Natural killer cell (primary cell): ENCODE measurements at regions of chr16 and their contacts with region 1.

Region 1: GRCh38 chr16:68980695-68981315 is 124.6 kb upstream of the HAS3 start:
- DNase-seq: no peak
- ATAC-seq: no peak
- H3K4me3 ChIP-seq: no peak overlapping the region
- H3K4me3 Mint-ChIP-seq: no peak overlapping the region
- H3K27ac ChIP-seq: no peak overlapping the region
- H3K27ac Mint-ChIP-seq: no peak overlapping the region
- H3K4me1 ChIP-seq: no peaks in the 10 kb centered on the region
- H3K4me1 Mint-ChIP-seq: no peaks in the 10 kb centered on the region
- H3K27me3 ChIP-seq: no peaks in the 10 kb centered on the region
- H3K27me3 Mint-ChIP-seq: no peaks in the 10 kb centered on the region
- CTCF ChIP-seq: no peak

Region 2: GRCh38 chr16:68520649-68521086 is 460.1 kb before region 1 on chr16:
- intact Hi-C with region 1: loop called (anchors 5 kb)
- DNase-seq: peak; percentile 79 to 95
- ATAC-seq: peak; percentile 98 to 99 (median 98)
- H3K4me3 ChIP-seq: no peak overlapping the region
- H3K4me3 Mint-ChIP-seq: peak overlapping the region; percentile 75
- H3K27ac ChIP-seq: no peak overlapping the region
- H3K27ac Mint-ChIP-seq: peak overlapping the region; percentile 56 to 87
- H3K4me1 ChIP-seq: peaks cover 11% of the 10 kb centered on the region
- H3K4me1 Mint-ChIP-seq: peaks cover 8 to 10% of the 10 kb centered on the region in 2 donors
- H3K27me3 ChIP-seq: no peaks in the 10 kb centered on the region
- H3K27me3 Mint-ChIP-seq: no peaks in the 10 kb centered on the region
- CTCF ChIP-seq: peak; percentile 99

Region 3: DNA sequence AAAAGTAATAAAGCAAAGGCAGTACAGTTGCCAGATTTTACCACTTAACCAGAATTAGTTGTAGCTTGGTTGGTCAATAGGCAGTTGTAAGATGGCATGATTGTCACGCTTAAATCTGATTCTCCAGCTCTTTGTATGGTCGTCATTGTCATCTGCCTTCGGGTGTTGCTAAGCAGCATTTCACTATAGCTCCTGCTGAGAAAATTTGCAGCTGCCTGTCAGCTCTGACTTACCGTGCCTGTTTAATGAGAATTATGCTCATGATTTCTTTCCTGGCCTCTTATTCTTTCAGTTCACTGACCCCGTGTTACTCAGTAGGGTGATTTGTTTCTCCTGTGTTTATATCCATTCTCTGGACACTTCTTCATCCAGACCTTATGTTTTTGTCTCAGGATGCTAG is 70.8 kb before region 1 on chr16:
- intact Hi-C with region 1: no loop called
- DNase-seq: no peak
- ATAC-seq: no peak
- H3K4me3 ChIP-seq: no peak overlapping the region
- H3K4me3 Mint-ChIP-seq: no peak overlapping the region
- H3K27ac ChIP-seq: no peak overlapping the region
- H3K27ac Mint-ChIP-seq: no peak overlapping the region
- H3K4me1 ChIP-seq: no peaks in the 10 kb centered on the region
- H3K4me1 Mint-ChIP-seq: no peaks in the 10 kb centered on the region
- H3K27me3 ChIP-seq: no peaks in the 10 kb centered on the region
- H3K27me3 Mint-ChIP-seq: no peaks in the 10 kb centered on the region
- CTCF ChIP-seq: no peak

Region 4: DNA sequence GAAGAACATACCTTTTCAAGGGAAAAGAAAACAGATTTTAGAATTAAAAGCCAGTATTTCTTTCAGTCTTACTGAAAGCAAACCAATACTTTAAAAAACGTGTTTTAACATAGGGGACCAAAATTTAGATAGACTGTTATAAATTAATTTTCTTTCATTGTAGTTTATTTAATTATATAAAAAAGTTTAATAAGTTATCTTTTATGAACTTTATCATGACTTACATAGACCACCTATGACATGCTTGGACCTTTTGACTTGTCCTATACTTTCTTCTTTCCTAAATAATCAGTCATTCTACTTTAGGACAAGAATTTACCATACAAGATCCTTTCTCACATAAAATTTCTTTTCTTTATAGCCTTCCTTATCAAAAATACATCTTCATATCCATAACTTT is 22.7 kb after region 1 on chr16:
- intact Hi-C with region 1: no loop called
- DNase-seq: no peak
- ATAC-seq: no peak
- H3K4me3 ChIP-seq: no peak overlapping the region
- H3K4me3 Mint-ChIP-seq: no peak overlapping the region
- H3K27ac ChIP-seq: no peak overlapping the region
- H3K27ac Mint-ChIP-seq: no peak overlapping the region
- H3K4me1 ChIP-seq: no peaks in the 10 kb centered on the region
- H3K4me1 Mint-ChIP-seq: no peaks in the 10 kb centered on the region
- H3K27me3 ChIP-seq: no peaks in the 10 kb centered on the region
- H3K27me3 Mint-ChIP-seq: no peaks in the 10 kb centered on the region
- CTCF ChIP-seq: no peak